BJ (cell line): ENCODE measurements at regions of chr1 and their contacts with region 1.

Region 1: DNA sequence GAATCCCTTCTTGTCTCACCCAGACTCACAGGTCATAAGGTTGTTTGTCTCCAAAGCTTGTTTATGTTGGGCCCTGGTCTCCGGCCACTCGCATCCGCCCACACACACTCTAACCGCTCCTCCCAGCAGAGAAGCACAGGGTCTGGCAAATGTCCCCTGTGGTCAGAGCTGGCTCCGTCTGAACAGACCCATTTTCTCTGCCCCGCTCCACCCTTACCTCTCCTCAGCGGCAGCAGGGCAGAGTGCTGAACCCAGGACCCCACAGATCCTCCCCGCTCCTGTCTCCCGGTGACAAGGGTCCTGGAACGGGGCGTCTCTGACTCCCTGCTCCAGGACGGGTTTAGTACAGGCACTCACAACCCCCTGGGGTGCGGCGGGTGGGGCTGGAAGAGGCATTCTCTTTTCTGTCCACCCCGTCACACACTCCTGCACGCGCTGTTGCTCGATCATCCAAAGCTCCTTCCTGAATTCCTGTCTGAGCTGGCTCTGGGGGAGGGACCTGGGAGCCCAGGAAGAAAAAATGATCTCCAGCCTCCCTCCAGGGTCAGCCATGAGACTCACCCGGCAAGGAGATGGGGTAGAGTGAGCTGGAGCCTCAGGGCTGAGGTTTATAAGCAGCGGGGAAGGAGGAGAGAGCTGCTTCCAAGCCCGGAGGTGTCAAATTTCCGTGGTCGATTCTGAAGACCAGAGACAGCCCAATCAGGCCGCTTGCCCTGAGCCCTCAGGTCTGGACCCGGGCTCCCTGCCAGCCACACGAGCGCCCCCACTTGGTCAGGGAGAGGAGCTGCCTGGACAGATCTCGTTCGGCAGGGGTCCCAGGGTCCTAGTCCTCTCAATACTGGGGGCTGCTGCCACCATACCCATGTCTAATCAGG is at the start of gene S100A13:
- DNase-seq: peak; percentile 69
- H3K4me3 ChIP-seq: peak within 1 kb of the TSS; percentile 57
- H3K27me3 ChIP-seq: no peaks in the 10 kb centered on the region
- CTCF ChIP-seq: peak; percentile 79
- polyA plus RNA-seq, gene S100A13: 310 and 313 TPM in 2 replicates

Region 2: DNA sequence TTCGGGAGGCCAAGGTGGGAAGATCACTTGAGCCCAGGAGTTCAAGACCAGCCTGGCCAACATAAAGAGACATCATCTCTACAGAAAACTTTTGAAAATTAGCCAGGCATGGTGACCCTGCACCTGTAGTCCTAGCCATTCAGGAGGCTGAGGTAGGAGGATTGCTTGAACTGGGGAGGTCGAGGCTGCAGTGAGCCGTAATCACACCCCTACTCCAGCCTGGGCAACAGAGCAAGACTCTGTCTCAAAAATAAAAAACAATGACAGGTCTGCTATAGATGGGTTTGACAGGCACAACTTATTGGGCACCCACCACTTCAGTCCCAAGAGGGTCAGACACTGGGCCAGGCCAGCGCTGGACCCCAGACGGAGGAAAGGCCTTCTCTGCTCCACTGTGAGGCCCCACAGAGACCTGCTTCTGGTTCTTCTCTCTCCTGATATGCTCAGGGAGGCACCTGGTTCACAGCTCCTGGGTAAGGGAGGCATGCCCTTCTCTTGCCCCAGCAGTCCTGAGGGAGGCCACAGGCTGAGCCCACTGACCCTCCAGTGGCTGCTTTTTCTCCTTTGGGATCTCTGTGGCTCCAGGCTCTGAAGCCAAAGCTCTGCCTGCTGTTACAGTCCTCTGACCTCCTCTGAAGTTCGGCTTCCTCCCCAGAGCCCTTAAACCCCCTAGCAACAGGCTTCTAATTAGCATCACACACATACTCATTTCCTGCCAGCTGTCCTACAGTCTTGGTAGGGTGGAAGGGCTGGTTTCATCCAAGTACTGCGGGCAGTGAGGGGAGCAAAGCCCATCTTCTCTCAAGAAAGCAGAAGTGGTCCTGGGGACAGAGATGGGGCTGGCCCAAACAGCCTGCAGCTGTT is 28.6 kb before region 1 on chr1:
- CTCF ChIA-PET with region 1: interaction called, 14 read pairs
- POLR2A ChIA-PET with region 1: no interaction called
- DNase-seq: no peak
- H3K4me3 ChIP-seq: no peak overlapping the region
- H3K27me3 ChIP-seq: no peaks in the 10 kb centered on the region
- CTCF ChIP-seq: no peak

Region 3: GRCh38 chr1:153608742-153609584 is 18.2 kb before region 1 on chr1:
- CTCF ChIA-PET with region 1: interaction called, 148 read pairs
- POLR2A ChIA-PET with region 1: interaction called, 20 read pairs
- DNase-seq: peak; percentile 84
- H3K4me3 ChIP-seq: peak overlapping the region; percentile 35
- H3K27me3 ChIP-seq: no peaks in the 10 kb centered on the region
- CTCF ChIP-seq: no peak